Natural killer cell (primary cell): ENCODE measurements at regions of chr16 and their contacts with region 1.

Region 1: DNA sequence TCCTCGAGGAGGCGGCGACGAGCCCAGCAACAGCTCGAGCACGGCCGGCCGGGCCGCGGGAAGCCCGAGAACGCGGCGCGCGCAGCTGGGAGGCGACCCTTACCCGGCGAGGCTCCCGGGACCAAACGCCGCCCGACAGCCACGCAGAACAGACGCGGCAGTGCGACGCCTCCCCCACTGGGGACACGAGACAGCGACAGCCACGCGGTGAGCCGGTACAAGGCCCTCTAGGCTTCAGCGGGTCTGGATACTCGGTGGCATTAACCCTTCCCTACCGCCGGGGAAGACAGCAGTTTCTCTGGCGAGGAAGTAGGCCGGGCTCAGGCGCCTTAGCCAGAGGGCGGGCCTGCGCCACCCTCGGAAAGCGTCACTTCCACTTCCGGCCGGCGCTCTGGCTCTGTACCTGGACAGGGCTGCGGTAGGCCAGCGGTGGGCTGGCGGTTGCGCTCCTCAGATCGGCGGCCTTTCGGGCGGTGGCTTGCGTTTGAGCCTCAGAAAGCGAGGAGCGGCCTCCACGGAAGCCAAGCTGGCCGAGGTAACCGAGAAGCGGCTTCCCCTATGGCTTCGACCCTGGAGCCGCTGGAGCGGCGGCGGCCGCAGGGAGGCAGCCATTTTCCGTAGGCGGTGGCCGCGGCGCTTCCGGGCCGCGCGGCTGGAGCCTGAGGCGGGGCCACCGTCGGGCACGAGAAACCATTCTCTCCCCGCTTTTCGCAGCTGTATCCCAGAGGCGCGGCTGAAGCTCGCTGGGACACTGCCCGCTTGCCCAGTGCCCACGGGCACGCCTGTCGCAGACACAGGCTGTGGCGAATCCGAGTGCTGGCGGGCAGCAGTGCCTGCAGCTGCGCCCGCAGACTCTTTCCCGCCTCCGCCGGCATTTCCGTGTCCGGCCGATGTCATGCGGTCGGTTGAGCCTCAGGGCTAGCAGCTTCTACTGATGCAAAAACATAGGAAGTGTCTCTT is at the starts of genes TIGD7 and ZNF75A:
- DNase-seq: peak; percentile 80 to 93
- ATAC-seq: peak; percentile 92 to 98 (median 93)
- H3K4me3 ChIP-seq: peak within 1 kb of the TSS; percentile 74
- H3K4me3 Mint-ChIP-seq: peak within 1 kb of the TSS; percentile 76
- H3K27ac ChIP-seq: peak within 1 kb of the TSS; percentile 89
- H3K27ac Mint-ChIP-seq: peak within 1 kb of the TSS; percentile 81 to 84
- H3K4me1 ChIP-seq: peaks cover 20% of the 10 kb centered on the region
- H3K4me1 Mint-ChIP-seq: peaks cover 11 to 21% of the 10 kb centered on the region in 2 donors
- H3K27me3 ChIP-seq: no peaks in the 10 kb centered on the region
- H3K27me3 Mint-ChIP-seq: no peaks in the 10 kb centered on the region
- CTCF ChIP-seq: no peak
- total RNA-seq, gene TIGD7: 3.7 to 9.1 (median 3.7) TPM
- total RNA-seq, gene ZNF75A: 30.6 to 44.6 (median 39.0) TPM

Region 2: DNA sequence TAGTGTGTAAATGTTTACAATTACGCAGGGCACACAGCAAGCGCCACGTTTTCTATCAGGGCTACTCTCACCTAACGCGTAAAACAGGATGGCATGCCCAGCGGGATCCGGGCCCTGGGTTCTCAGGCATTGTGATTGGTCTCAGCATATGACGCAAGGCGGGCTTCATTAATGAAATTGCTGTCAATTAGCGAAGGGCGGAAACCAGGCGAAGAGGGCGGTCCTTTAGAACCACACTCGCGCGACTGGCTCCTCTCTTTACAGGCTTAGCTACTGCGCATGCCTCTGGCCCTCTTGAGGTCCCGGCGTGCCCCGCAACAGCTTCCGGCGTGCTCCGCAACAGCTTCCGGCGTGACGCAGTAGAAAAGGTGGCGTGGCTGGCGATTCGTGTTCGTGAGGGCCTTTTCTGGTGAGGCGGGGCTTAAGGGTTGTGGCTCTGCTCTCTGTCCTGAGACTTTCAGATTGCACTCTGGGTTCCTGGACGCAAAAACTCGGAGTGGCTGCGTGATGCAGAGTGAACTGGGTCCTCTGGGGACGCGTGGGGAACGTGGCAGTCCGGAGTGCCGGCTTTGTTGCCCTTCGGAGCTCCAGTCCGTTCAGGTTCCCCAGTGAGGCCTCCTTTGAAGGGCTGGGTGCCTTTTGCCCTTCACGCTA is 59.5 kb after region 1 on chr16:
- intact Hi-C with region 1: loop called (anchors 10 kb)
- DNase-seq: peak; percentile 68 to 94
- ATAC-seq: peak; percentile 89 to 94 (median 93)
- H3K4me3 ChIP-seq: peak overlapping the region; percentile 49
- H3K4me3 Mint-ChIP-seq: peak overlapping the region; percentile 83
- H3K27ac ChIP-seq: peak overlapping the region; percentile 91
- H3K27ac Mint-ChIP-seq: peak overlapping the region; percentile 72 to 87
- H3K4me1 ChIP-seq: peaks cover 16% of the 10 kb centered on the region
- H3K4me1 Mint-ChIP-seq: peaks cover 0 to 10% of the 10 kb centered on the region in 2 donors
- H3K27me3 ChIP-seq: peaks cover 12% of the 10 kb centered on the region
- H3K27me3 Mint-ChIP-seq: peaks cover 16 to 23% of the 10 kb centered on the region in 2 donors
- CTCF ChIP-seq: no peak